AG04449 (cell line): ENCODE measurements at regions of chr1 and their contacts with region 1.

Region 1: GRCh38 chr1:19436716-19437476 is 48.4 kb downstream of the CAPZB start:
- DNase-seq: no peak
- H3K4me3 ChIP-seq: no peak overlapping the region
- CTCF ChIP-seq: no peak

Region 2: DNA sequence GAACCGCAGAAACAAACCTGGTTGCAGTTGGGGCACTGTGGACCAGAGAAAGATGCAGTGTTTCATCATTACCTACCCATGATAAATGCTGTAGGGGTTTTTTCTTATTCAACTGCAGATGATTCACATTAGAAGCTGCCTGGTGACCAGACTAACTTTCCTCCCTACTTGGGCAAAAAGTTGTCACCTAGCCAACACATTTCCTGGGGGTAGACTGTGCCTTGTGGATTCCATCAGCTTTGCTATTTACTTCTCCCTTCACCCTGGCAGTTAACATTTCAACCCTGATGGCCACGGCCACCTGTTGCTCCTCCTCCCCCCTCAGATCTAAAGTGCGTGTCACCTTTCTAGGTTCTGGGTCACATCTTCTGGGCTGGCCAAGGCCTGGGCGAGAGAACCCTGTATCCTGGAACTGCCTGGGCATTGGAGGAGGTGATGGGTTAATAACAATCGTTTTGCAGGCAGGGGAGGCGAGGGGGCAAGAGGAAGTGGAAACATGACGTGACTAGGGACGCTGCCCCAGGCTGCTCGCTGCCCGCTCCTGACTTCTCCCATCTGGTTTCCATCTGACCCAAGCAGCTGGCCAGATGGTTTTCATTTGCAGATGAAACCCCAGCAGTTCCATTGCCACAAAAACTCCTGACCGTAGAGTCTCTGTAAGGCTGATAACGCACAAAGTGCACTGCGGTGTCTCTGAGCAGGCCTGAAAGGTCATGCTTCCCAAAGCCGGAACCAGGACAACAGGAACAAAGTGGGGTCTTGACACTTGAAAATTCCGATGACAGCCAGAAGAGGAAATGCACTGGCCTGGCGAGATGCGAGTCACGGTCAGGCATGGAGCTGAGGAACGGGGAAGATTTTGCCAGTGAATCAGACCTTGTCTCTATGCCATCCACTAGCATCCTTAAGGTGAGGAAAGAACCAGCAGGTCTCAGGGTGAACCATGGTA is 11.9 kb after region 1 on chr1:
- CTCF ChIA-PET with region 1: interaction called, 20 read pairs
- POLR2A ChIA-PET with region 1: interaction called, 6 read pairs
- DNase-seq: peak; percentile 51
- H3K4me3 ChIP-seq: no peak overlapping the region; the same call in 1 of the 2 replicates
- CTCF ChIP-seq: no peak